Ascending aorta (tissue), 2 donors: ENCODE measurements at regions of chr11 and their contacts with region 1.

Region 1: DNA sequence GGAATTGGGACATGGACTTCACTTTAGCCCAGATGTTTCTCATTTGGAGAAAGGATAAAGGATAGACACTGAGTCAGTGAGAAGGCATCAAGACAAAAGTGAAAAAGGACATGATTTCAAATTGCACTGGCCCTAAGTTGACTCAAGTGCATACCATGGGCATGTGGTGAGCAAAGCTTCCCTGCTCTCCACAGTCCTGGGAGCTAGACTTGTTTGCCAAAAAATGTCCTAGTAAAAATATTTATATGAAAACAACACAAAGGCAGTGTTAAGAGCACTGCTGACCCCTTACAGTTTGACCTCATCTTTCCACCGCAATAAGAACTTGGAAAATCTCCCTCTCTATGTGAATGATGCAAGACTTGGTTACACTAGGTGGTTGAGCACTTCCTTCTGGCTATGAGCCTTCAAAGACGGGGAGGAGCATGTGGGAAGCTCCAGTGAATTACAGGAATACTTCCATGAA is 46.5 kb upstream of the FIBIN start:
- DNase-seq: peak in 1 of 2 donors; percentile 86
- H3K4me3 ChIP-seq: no peak overlapping the region
- H3K27ac ChIP-seq: peak overlapping the region; percentile 70 to 81
- H3K4me1 ChIP-seq: peaks cover 0 to 52% of the 10 kb centered on the region in 2 donors
- H3K27me3 ChIP-seq: no peaks in the 10 kb centered on the region
- CTCF ChIP-seq: no peak

Region 2: GRCh38 chr11:26719289-26719973 is 228.0 kb before region 1 on chr11:
- intact Hi-C with region 1: no loop called
- DNase-seq: no peak
- H3K4me3 ChIP-seq: no peak overlapping the region
- H3K27ac ChIP-seq: no peak overlapping the region
- H3K4me1 ChIP-seq: no peaks in the 10 kb centered on the region
- H3K27me3 ChIP-seq: no peaks in the 10 kb centered on the region
- CTCF ChIP-seq: no peak

Region 3: DNA sequence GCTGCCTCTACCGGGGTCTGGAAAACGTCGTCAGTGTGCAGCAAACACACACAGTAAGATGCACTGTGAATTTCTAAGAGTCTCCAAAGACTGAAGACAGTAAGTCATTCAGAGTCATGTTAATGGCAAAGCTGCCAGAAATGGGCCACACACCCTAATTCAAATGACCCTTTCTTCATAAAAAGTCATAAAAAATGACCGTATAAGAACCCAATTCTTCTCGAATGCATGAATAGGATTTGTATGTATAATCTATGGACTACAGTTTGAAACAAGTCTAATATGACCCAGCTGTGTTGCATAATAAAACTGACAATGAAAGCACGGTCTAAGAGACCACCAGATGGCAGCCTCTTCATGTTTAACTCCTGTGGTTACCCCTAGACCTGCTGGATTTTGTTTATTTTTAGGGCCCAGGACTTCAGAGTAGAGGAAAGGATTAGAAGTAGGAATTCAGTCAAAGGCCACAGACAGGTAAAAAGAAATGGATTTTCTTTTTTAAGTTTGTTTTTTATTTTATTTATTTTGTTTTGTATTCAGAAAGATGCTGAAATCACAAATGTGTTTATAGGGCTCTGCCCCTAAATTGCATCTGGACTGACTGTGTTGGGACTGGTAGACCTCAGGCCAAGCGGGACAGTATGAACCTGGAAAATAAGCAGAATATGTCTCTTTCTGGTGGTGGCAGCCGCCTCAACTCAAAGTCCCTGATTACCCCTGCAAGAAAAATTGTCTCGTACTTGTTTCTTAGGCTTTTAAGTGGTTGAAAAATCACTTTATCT is 193.5 kb before region 1 on chr11:
- intact Hi-C with region 1: loop called (anchors 5 kb)
- DNase-seq: peak in 1 of 2 donors; percentile 79
- H3K4me3 ChIP-seq: no peak overlapping the region
- H3K27ac ChIP-seq: no peak overlapping the region
- H3K4me1 ChIP-seq: peaks cover 0 to 9% of the 10 kb centered on the region in 2 donors
- H3K27me3 ChIP-seq: no peaks in the 10 kb centered on the region
- CTCF ChIP-seq: peak; percentile 61 to 91 (median 81)

Region 4: DNA sequence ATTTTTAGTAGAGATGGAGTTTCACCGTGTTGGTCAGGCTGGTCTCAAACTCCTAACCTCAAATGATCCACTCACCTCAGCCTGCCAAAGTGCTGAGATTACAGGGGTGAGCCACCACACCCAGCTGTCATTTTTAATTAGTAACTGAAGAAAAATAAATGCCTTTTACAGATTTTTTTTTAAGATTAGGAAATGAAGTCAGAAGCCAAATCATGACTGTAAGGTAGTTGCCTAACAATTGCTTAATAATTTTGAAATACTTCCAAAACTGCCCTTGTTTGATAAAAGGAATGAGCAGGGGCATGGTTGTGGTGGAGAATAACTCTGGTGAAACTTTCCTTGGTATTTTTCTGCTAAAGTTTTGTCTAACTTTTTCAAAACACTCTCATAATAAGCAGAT is 126.7 kb before region 1 on chr11:
- intact Hi-C with region 1: loop called (anchors 2 kb)
- DNase-seq: peak in 1 of 2 donors; percentile 69
- H3K4me3 ChIP-seq: no peak overlapping the region
- H3K27ac ChIP-seq: peak overlapping the region; percentile 56 to 67
- H3K4me1 ChIP-seq: peaks cover 0 to 12% of the 10 kb centered on the region in 2 donors
- H3K27me3 ChIP-seq: no peaks in the 10 kb centered on the region
- CTCF ChIP-seq: no peak

Region 5: DNA sequence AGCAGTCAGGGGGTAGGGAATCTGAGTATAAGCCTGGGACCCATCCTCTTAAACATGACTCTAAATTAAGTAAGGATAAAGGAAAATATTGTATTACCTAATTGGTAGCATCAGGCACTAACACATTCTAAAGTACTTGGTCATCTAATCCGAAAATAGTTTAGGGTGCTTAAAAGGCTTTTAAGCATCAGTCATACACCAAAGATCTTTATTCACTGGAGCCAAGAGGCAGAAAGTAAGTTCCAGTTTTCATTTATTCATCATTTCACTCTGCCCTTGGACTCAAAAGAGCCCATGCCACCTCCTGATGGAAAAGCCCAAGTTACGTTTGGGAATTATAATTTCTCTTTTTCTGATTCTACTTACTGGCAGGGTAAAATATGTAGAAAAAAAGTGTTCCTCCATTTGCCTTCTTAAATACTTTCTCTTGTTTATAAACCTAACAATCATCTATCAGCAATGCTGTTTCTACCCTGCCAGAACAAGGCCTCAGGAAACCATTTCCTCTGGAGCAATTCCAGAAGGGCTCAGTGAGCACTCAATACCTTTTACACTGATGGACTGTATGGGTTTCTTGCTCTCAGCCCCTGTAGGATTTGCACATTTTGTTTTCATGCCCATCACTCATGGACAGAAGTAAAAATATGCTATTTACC is 105.5 kb before region 1 on chr11:
- intact Hi-C with region 1: loop called (anchors 1 kb)
- DNase-seq: peak in 1 of 2 donors; percentile 70
- H3K4me3 ChIP-seq: no peak overlapping the region
- H3K27ac ChIP-seq: peak overlapping the region; percentile 94 to 96
- H3K4me1 ChIP-seq: peaks cover 13 to 64% of the 10 kb centered on the region in 2 donors
- H3K27me3 ChIP-seq: no peaks in the 10 kb centered on the region
- CTCF ChIP-seq: no peak

Region 6: GRCh38 chr11:26849036-26849435 is 98.4 kb before region 1 on chr11:
- intact Hi-C with region 1: loop called (anchors 2 kb)
- DNase-seq: peak in 1 of 2 donors; percentile 68
- H3K4me3 ChIP-seq: no peak overlapping the region
- H3K27ac ChIP-seq: peak overlapping the region; percentile 94 to 96
- H3K4me1 ChIP-seq: peaks cover 3 to 49% of the 10 kb centered on the region in 2 donors
- H3K27me3 ChIP-seq: no peaks in the 10 kb centered on the region
- CTCF ChIP-seq: no peak

Region 7: GRCh38 chr11:26974069-26974783 is 26.8 kb after region 1 on chr11:
- intact Hi-C with region 1: no loop called
- DNase-seq: no peak
- H3K4me3 ChIP-seq: no peak overlapping the region
- H3K27ac ChIP-seq: peak overlapping the region; percentile 32 to 55
- H3K4me1 ChIP-seq: peaks cover 0 to 8% of the 10 kb centered on the region in 2 donors
- H3K27me3 ChIP-seq: no peaks in the 10 kb centered on the region
- CTCF ChIP-seq: no peak

Region 8: GRCh38 chr11:28107748-28108618 is 1160.6 kb after region 1 on chr11 and contains the starts of genes KIF18A and METTL15:
- intact Hi-C with region 1: loop called (anchors 5 kb)
- DNase-seq: peak; percentile 98 to 100
- H3K4me3 ChIP-seq: peak within 1 kb of the TSS; percentile 74 to 76
- H3K27ac ChIP-seq: peak within 1 kb of the TSS; percentile 87 to 88
- H3K4me1 ChIP-seq: peaks cover 4 to 15% of the 10 kb centered on the region in 2 donors
- H3K27me3 ChIP-seq: no peaks in the 10 kb centered on the region
- CTCF ChIP-seq: no peak
- total RNA-seq, gene KIF18A: not detected
- total RNA-seq, gene METTL15: 0.32 TPM